K562 (cell line): ENCODE measurements at regions of chr5 and their contacts with region 1.

Region 1: DNA sequence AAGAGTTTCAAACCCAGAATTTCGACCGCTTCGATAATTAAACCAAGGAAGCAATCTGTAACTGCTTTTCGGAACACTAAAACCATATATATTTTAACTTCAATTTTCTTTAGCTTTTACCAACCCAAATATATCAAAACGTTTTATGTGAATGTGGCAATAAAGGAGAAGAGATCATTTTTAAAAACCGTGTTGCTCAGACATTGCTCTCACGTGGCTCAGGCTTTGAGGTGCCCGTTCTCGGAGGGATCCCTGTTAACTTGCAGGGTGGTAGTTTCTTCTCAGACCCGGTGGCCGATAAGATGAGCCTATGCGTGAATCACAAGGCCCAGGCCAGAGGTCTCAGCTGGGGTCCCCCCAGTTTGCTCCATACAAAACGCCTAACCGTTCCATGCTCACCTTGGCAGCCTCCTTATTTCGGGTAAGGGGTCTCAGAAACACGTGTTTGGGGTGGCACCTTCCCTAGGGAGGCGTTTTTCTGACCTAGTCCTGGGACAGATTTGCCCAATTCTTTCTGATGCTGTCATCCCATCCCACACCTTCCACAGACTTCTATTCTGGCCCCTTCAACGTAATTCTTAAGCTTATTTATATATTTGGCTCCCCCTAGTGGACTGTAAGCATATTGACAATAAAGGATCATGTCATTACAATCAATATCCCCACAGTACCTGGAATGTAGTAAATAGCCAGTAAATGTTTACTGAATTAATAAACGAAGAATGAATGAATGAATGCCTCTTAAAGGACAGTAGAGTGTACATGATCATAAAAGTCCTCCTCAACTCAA is 48.1 kb downstream of the THBS4 start:
- DNase-seq: peak; percentile 63 to 70 (median 63)
- ATAC-seq: peak; percentile 86
- H3K4me3 ChIP-seq: peak overlapping the region; percentile 3; the same call in 1 of the 2 replicates
- H3K27ac ChIP-seq: 0 out of 3 replicates have a peak overlapping the region, but pooled peaks have one; percentile 5
- H3K4me1 ChIP-seq: peaks cover 0 to 12% of the 10 kb centered on the region in 2 experiments; a peak in 3 of 5 replicates
- H3K27me3 ChIP-seq: peaks cover 0 to 7% of the 10 kb centered on the region in 2 experiments; a peak in 2 of 5 replicates
- CTCF ChIP-seq: peak; percentile 65 to 81 (median 71); a peak in 5 of 6 replicates
- EP300 ChIP-seq: no peak
- POLR2A ChIP-seq: no peak
- RAD21 ChIP-seq: peak; percentile 75 to 80

Region 2: DNA sequence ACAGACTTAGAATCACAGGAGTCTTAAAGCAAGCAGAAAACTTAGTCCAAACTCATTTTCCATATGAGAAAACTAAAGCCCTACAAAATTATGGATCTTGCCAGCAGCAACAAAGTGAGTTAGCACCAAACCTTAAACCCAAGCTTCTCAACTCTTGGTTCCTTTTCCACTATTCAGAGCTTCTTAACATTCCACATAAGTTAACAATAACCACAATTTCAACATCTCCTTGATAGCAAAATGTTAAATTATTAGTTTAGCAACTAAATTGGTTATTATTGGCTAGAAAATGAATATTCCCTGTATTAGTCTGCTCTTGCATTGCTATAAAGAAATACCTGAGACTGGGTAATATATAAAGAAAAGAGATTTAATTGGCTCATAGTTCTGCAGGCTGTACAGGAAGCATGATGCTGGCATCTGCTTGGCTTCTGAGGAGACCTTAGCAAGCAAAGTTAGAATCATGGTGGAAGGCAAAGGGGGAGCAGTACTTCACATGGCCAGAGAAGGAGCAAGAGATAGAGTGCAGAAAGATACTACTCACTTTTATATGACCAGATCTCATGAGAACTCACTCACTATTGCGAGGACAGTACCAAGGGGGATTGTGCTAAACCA is 1072.0 kb before region 1 on chr5:
- CTCF ChIA-PET with region 1: no interaction called
- POLR2A ChIA-PET with region 1: no interaction called
- in situ Hi-C with region 1: loop called (anchors 10 kb)
- intact Hi-C with region 1: no loop called
- DNase-seq: no peak
- ATAC-seq: peak; percentile 59
- H3K4me3 ChIP-seq: no peak overlapping the region
- H3K27ac ChIP-seq: no peak overlapping the region
- H3K4me1 ChIP-seq: no peaks in the 10 kb centered on the region
- H3K27me3 ChIP-seq: peaks cover under 1 to 9% of the 10 kb centered on the region in 2 experiments; a peak in 2 of 5 replicates
- CTCF ChIP-seq: peak in 2 of 3 experiments; percentile 25 to 26; a peak in 2 of 6 replicates
- EP300 ChIP-seq: no peak
- POLR2A ChIP-seq: no peak
- RAD21 ChIP-seq: no peak

Region 3: DNA sequence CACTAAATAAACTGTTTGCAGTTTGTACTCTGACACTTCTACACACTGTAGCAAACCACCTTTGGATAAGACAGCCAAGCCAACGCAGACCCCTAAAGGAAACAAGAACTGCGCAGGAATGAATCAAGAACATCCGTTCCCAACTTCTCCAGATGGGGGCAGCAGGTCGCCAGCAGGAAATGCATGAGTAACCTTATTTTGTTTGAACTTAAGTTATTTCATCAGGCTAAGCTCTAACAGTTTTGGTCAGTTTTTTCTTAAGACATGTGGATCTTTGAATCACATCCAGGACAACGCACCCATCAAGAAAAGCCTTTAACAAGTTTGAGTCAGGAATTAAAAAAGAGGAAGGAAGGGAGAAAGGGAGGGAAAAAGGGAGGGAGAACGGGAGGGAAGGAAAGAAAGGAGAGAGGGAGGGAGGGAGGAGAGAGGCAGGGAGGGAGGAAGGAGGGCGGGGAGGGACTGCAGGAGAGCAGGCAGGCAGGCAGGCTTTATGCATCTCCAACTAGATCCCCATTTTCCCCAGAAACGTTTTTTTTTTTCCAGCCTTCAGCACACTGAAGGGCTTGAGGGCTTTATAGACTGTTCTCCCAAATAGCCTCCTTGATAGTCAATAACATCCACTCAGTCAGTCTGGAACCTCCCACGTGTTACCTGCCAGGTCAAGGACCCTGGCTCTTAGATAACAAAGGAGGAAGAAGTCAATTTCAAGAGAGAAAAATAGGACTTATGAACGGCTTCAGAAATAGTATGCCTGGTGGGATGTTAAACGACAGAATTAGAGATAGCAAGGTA is 949.4 kb before region 1 on chr5:
- CTCF ChIA-PET with region 1: interaction called, 3 read pairs
- POLR2A ChIA-PET with region 1: no interaction called
- in situ Hi-C with region 1: no loop called
- intact Hi-C with region 1: loop called (anchors 5 kb)
- DNase-seq: peak; percentile 49 to 83 (median 52)
- ATAC-seq: peak; percentile 89
- H3K4me3 ChIP-seq: 0 out of 2 replicates have a peak overlapping the region, but pooled peaks have one; percentile 7
- H3K27ac ChIP-seq: peak overlapping the region; percentile 27; the same call in 1 of the 3 replicates
- H3K4me1 ChIP-seq: peaks cover 3% of the 10 kb centered on the region in 2 experiments; a peak in 1 of 5 replicates
- H3K27me3 ChIP-seq: no peaks in the 10 kb centered on the region
- CTCF ChIP-seq: peak; percentile 84 to 90 (median 87)
- EP300 ChIP-seq: peak; percentile 50
- POLR2A ChIP-seq: no peak
- RAD21 ChIP-seq: peak; percentile 77 to 82

Region 4: GRCh38 chr5:79689541-79690466 is 393.5 kb before region 1 on chr5 and contains the start of gene CMYA5:
- CTCF ChIA-PET with region 1: no interaction called
- POLR2A ChIA-PET with region 1: no interaction called
- in situ Hi-C with region 1: no loop called
- intact Hi-C with region 1: loop called (anchors 10 kb)
- DNase-seq: no peak
- ATAC-seq: no peak
- H3K4me3 ChIP-seq: no peak within 1 kb of the TSS
- H3K27ac ChIP-seq: no peak within 1 kb of the TSS
- H3K4me1 ChIP-seq: peaks cover 0 to 4% of the 10 kb centered on the region in 2 experiments; a peak in 3 of 5 replicates
- H3K27me3 ChIP-seq: no peaks in the 10 kb centered on the region
- CTCF ChIP-seq: no peak
- EP300 ChIP-seq: no peak
- POLR2A ChIP-seq: no peak
- RAD21 ChIP-seq: no peak
- polyA plus RNA-seq, gene CMYA5: 0.32 to 0.48 TPM

Region 5: GRCh38 chr5:79857714-79858409 is 225.4 kb before region 1 on chr5:
- CTCF ChIA-PET with region 1: interaction called, 4 read pairs
- POLR2A ChIA-PET with region 1: no interaction called
- in situ Hi-C with region 1: no loop called
- intact Hi-C with region 1: loop called (anchors 5 kb)
- DNase-seq: peak; percentile 47 to 82 (median 67)
- ATAC-seq: peak; percentile 80
- H3K4me3 ChIP-seq: no peak overlapping the region
- H3K27ac ChIP-seq: no peak overlapping the region
- H3K4me1 ChIP-seq: peaks cover 0 to 3% of the 10 kb centered on the region in 2 experiments; a peak in 1 of 5 replicates
- H3K27me3 ChIP-seq: peaks cover 9 to 30% of the 10 kb centered on the region in 2 experiments; a peak in 4 of 5 replicates
- CTCF ChIP-seq: peak; percentile 84 to 91 (median 90)
- EP300 ChIP-seq: no peak
- POLR2A ChIP-seq: no peak
- RAD21 ChIP-seq: peak; percentile 80 to 92

Region 6: GRCh38 chr5:79878721-79879336 is 204.5 kb before region 1 on chr5:
- CTCF ChIA-PET with region 1: interaction called, 5 read pairs
- POLR2A ChIA-PET with region 1: no interaction called
- in situ Hi-C with region 1: no loop called
- intact Hi-C with region 1: loop called (anchors 1 kb)
- DNase-seq: peak; percentile 43 to 52 (median 48)
- ATAC-seq: peak; percentile 89
- H3K4me3 ChIP-seq: no peak overlapping the region
- H3K27ac ChIP-seq: no peak overlapping the region
- H3K4me1 ChIP-seq: no peaks in the 10 kb centered on the region
- H3K27me3 ChIP-seq: peaks cover 21 to 27% of the 10 kb centered on the region in 2 experiments
- CTCF ChIP-seq: peak; percentile 66 to 78 (median 75)
- EP300 ChIP-seq: no peak
- POLR2A ChIP-seq: no peak
- RAD21 ChIP-seq: peak; percentile 25 to 61; a peak in 2 of 4 replicates

Region 7: GRCh38 chr5:80672140-80672736 is 588.9 kb after region 1 on chr5:
- CTCF ChIA-PET with region 1: no interaction called
- POLR2A ChIA-PET with region 1: no interaction called
- in situ Hi-C with region 1: loop called (anchors 10 kb)
- intact Hi-C with region 1: no loop called
- DNase-seq: peak; percentile 56 to 82 (median 63)
- ATAC-seq: peak; percentile 95
- H3K4me3 ChIP-seq: no peak overlapping the region
- H3K27ac ChIP-seq: no peak overlapping the region
- H3K4me1 ChIP-seq: peaks cover 0 to 5% of the 10 kb centered on the region in 2 experiments; a peak in 1 of 5 replicates
- H3K27me3 ChIP-seq: no peaks in the 10 kb centered on the region
- CTCF ChIP-seq: peak; percentile 69 to 80 (median 73)
- EP300 ChIP-seq: no peak
- POLR2A ChIP-seq: no peak
- RAD21 ChIP-seq: peak; percentile 74 to 76